Natural killer cell (primary cell): ENCODE measurements at regions of chr6 and their contacts with region 1.

Region 1: GRCh38 chr6:35452186-35453090 is at the start of gene FANCE:
- DNase-seq: peak; percentile 89 to 90
- ATAC-seq: peak; percentile 86 to 94 (median 91)
- H3K4me3 ChIP-seq: peak within 1 kb of the TSS; percentile 67
- H3K4me3 Mint-ChIP-seq: peak within 1 kb of the TSS; percentile 91
- H3K27ac ChIP-seq: peak within 1 kb of the TSS; percentile 25
- H3K27ac Mint-ChIP-seq: peak within 1 kb of the TSS; percentile 48 to 83
- H3K4me1 ChIP-seq: peaks cover 12% of the 10 kb centered on the region
- H3K4me1 Mint-ChIP-seq: peaks cover 23 to 34% of the 10 kb centered on the region in 2 donors
- H3K27me3 ChIP-seq: no peaks in the 10 kb centered on the region
- H3K27me3 Mint-ChIP-seq: peaks cover 0 to under 1% of the 10 kb centered on the region in 2 donors
- CTCF ChIP-seq: no peak
- total RNA-seq, gene FANCE: 2.2 to 3.2 (median 2.6) TPM

Region 2: GRCh38 chr6:35381132-35381531 is 71.3 kb before region 1 on chr6:
- intact Hi-C with region 1: no loop called
- DNase-seq: no peak
- ATAC-seq: no peak
- H3K4me3 ChIP-seq: no peak overlapping the region
- H3K4me3 Mint-ChIP-seq: no peak overlapping the region
- H3K27ac ChIP-seq: no peak overlapping the region
- H3K27ac Mint-ChIP-seq: no peak overlapping the region
- H3K4me1 ChIP-seq: peaks cover 18% of the 10 kb centered on the region
- H3K4me1 Mint-ChIP-seq: peaks cover 26 to 50% of the 10 kb centered on the region in 2 donors
- H3K27me3 ChIP-seq: no peaks in the 10 kb centered on the region
- H3K27me3 Mint-ChIP-seq: no peaks in the 10 kb centered on the region
- CTCF ChIP-seq: no peak

Region 3: DNA sequence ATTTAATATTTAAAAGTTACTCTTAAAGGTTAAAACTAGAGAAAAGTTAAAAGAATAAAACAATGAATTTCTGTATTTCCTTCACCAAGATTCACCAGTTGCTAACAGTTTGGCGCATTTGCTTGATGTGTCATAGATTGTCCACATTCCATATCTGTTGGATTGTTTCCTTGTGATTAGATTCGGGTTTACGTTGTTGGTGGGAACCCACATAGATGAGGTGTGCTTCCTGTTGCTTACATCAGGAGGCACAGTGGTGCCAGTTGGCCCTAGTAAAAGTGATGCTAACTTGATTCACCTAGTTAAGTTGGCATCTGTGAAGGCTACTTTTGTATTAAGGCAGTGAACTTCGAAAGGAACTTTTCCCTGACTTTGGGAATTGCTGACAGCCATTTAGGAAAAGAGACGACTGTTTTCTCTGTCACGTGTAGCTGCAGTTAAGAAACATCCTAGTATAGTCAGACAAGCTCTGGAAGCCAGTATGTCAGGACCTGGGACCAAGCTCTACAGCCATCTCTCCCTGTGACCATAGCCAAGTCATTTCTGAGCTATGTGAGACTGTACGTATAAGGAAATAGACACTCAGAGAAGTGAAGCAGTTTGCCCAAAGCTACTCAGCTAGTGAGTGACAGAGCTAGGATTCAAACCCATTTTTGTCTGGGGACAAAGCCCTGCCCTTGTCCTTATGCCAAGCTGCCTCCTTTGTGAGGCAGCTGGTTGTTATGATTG is 61.0 kb before region 1 on chr6:
- intact Hi-C with region 1: loop called (anchors 5 kb)
- DNase-seq: peak in 1 of 2 donors; percentile 54
- ATAC-seq: peak; percentile 42 to 57 (median 57)
- H3K4me3 ChIP-seq: no peak overlapping the region
- H3K4me3 Mint-ChIP-seq: no peak overlapping the region
- H3K27ac ChIP-seq: no peak overlapping the region
- H3K27ac Mint-ChIP-seq: peak overlapping the region in 1 of 2 donors; percentile 44
- H3K4me1 ChIP-seq: peaks cover 31% of the 10 kb centered on the region
- H3K4me1 Mint-ChIP-seq: peaks cover 19 to 40% of the 10 kb centered on the region in 2 donors
- H3K27me3 ChIP-seq: no peaks in the 10 kb centered on the region
- H3K27me3 Mint-ChIP-seq: no peaks in the 10 kb centered on the region
- CTCF ChIP-seq: no peak

Region 4: DNA sequence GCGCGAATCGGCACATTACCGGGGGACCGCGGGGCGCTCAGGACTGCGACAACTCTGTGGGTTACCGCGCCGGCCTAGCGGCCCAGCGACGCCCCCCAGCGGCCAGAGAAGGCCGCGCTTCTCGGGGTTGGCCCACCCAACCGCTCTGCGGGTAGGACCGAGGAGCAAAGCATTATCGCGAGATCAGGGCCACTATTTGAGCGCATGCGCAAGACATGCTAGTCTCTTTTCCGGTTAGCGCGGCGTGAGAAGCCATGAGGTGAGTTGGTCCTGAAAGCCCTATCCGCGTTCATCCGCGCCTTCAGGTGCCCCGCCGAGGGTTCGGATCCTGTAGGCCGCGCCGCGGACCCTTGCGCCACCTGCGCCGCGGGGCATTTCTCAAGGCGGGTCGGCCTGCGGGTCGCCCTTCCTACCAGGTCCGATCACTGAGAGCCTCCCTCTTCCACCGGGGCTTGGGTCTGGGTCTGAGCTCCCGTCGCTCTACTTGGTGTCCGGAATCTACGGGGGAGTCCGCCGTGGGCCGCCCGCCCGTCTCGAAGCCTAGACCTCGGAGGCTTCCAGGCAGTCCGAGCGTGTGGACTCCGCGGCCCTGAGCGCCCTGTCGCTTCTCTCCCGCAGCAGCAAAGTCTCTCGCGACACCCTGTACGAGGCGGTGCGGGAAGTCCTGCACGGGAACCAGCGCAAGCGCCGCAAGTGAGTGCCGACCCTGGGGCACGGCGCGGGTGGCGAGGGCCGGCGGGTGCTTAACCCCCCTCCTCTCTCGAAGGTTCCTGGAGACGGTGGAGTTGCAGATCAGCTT is 15.9 kb after region 1 on chr6 and contains the start of gene RPL10A:
- intact Hi-C with region 1: loop called (anchors 1 kb)
- DNase-seq: peak; percentile 91 to 99
- ATAC-seq: peak; percentile 87 to 97 (median 89)
- H3K4me3 ChIP-seq: peak within 1 kb of the TSS; percentile 67
- H3K4me3 Mint-ChIP-seq: peak within 1 kb of the TSS; percentile 97
- H3K27ac ChIP-seq: peak within 1 kb of the TSS; percentile 79
- H3K27ac Mint-ChIP-seq: peak within 1 kb of the TSS; percentile 92 to 98
- H3K4me1 ChIP-seq: peaks cover 31% of the 10 kb centered on the region
- H3K4me1 Mint-ChIP-seq: peaks cover 38% of the 10 kb centered on the region in 2 donors
- H3K27me3 ChIP-seq: no peaks in the 10 kb centered on the region
- H3K27me3 Mint-ChIP-seq: no peaks in the 10 kb centered on the region
- CTCF ChIP-seq: peak; percentile 87
- total RNA-seq, gene RPL10A: 723 to 943 (median 942) TPM

Region 5: DNA sequence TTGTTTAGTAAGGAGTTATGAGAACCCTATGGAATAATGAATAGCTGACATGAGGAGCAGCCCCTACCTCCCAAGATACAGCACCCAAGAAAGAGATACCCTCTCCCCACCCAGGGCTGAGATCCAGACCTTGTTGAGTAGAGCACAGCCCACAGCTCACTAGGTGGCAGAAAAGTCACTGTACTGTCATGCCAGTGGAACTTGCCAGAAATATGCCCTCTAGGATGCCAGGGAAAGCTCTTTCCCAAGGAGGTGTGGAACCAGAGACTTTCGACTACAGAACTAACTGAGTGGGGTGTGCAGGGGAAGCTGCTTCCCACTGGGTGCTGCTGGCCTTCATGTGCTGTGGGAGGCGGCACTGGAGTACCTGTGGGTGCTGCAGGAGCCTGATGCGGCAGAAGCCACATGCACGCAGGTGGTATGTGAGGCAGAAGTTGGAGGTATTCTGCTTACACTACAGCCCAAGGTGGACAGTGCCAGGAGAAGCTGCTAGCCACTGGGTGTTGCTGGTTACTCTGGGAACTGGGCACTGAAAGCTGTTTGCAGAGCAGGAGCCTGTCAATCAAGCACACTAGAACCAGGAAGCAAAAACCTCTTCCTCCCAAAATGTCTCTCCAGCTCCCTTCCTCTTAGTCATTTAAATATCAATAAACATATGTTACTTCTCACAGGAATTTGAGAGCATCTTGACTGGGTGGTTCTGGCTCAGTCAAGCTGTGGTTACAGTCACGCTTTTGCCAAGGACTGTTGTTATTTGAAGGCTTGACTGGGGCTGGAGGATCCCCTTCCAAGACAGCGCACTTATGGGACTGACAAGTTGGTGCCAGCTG is 302.2 kb after region 1 on chr6:
- intact Hi-C with region 1: no loop called
- DNase-seq: no peak
- ATAC-seq: no peak
- H3K4me3 ChIP-seq: no peak overlapping the region
- H3K4me3 Mint-ChIP-seq: no peak overlapping the region
- H3K27ac ChIP-seq: no peak overlapping the region
- H3K27ac Mint-ChIP-seq: no peak overlapping the region
- H3K4me1 ChIP-seq: no peaks in the 10 kb centered on the region
- H3K4me1 Mint-ChIP-seq: no peaks in the 10 kb centered on the region
- H3K27me3 ChIP-seq: no peaks in the 10 kb centered on the region
- H3K27me3 Mint-ChIP-seq: peaks cover 0 to 13% of the 10 kb centered on the region in 2 donors
- CTCF ChIP-seq: no peak

Region 6: DNA sequence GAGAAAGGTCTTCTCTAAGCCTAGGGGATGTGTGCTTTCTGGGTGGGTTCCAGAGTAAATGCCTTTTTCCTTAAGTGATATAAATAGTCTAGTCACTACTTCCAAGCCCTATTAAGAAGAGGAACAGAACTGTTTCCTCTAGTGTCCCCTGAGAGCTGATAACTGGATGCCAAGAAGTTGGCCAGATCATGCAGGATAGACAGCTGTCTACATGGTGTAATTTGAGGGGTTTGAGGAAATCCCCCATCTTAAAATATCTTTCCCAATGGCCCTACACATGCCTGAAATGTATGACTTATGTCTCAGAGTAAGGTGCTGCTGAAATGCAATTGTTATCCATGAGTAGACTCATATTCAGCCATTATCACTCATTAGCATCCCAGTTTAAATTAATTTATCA is 1697.3 kb after region 1 on chr6:
- intact Hi-C with region 1: no loop called
- DNase-seq: no peak
- ATAC-seq: no peak
- H3K4me3 ChIP-seq: no peak overlapping the region
- H3K4me3 Mint-ChIP-seq: no peak overlapping the region
- H3K27ac ChIP-seq: no peak overlapping the region
- H3K27ac Mint-ChIP-seq: no peak overlapping the region
- H3K4me1 ChIP-seq: no peaks in the 10 kb centered on the region
- H3K4me1 Mint-ChIP-seq: no peaks in the 10 kb centered on the region
- H3K27me3 ChIP-seq: no peaks in the 10 kb centered on the region
- H3K27me3 Mint-ChIP-seq: peaks cover 7 to 10% of the 10 kb centered on the region in 2 donors
- CTCF ChIP-seq: no peak